Naive thymus-derived CD4-positive, alpha-beta T cell (primary cell): ENCODE measurements at regions of chr4 and their contacts with region 1.

Region 1: GRCh38 chr4:146916479-146917076 is 29.1 kb downstream of the TTC29 start:
- DNase-seq: peak in 5 of 9 donors; percentile 3 to 19 (median 18)
- ATAC-seq: no peak
- H3K4me3 ChIP-seq: no peak overlapping the region
- H3K4me3 Mint-ChIP-seq: no peak overlapping the region
- H3K27ac ChIP-seq: no peak overlapping the region
- H3K27ac Mint-ChIP-seq: no peak overlapping the region
- H3K4me1 ChIP-seq: no peaks in the 10 kb centered on the region
- H3K4me1 Mint-ChIP-seq: no peaks in the 10 kb centered on the region
- H3K27me3 ChIP-seq: peaks cover 0 to 3% of the 10 kb centered on the region in 2 donors
- H3K27me3 Mint-ChIP-seq: peaks cover 0 to 20% (median 13%) of the 10 kb centered on the region in 5 donors

Region 2: GRCh38 chr4:145285928-145286327 is 1630.7 kb before region 1 on chr4:
- CTCF ChIA-PET with region 1: no interaction called
- POLR2A ChIA-PET with region 1: no interaction called
- intact Hi-C with region 1: no loop called
- DNase-seq: no peak
- ATAC-seq: no peak
- H3K4me3 ChIP-seq: no peak overlapping the region
- H3K4me3 Mint-ChIP-seq: no peak overlapping the region
- H3K27ac ChIP-seq: no peak overlapping the region
- H3K27ac Mint-ChIP-seq: no peak overlapping the region
- H3K4me1 ChIP-seq: no peaks in the 10 kb centered on the region
- H3K4me1 Mint-ChIP-seq: no peaks in the 10 kb centered on the region
- H3K27me3 ChIP-seq: no peaks in the 10 kb centered on the region
- H3K27me3 Mint-ChIP-seq: peaks cover 0 to 13% (median 4%) of the 10 kb centered on the region in 5 donors

Region 3: DNA sequence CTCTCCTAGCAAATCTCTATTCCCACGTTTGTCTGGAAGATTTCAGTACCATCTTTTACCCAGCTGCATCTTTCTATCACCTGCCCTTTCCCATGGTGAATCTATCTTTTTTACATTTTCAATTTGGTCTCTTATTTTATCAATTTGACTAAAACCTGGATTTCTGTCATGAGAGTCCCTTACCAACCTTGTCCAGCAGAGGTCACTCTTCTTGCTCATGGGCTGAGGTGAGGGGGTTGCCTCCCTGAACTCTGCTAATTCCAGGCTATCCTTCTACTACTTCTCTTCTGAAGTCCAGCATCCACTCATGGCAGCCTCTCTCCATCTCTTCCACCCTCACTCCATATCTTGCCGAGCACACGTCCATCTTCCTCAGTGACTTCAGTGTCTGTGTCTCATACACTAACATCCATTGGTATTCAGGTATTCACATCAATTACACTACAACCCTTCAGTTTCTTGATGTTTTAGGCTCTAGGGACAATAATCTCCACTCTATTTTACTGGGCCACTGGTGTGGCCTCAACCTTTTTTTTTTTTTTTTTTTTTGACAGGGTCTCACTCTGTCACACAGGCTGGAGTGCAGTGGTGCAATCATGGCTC is 960.2 kb before region 1 on chr4:
- CTCF ChIA-PET with region 1: no interaction called
- POLR2A ChIA-PET with region 1: no interaction called
- intact Hi-C with region 1: loop called (anchors 2 to 5 kb)
- DNase-seq: peak in 7 of 9 donors; percentile 22 to 43 (median 28)
- ATAC-seq: peak; percentile 70
- H3K4me3 ChIP-seq: no peak overlapping the region
- H3K4me3 Mint-ChIP-seq: no peak overlapping the region
- H3K27ac ChIP-seq: no peak overlapping the region
- H3K27ac Mint-ChIP-seq: no peak overlapping the region
- H3K4me1 ChIP-seq: no peaks in the 10 kb centered on the region
- H3K4me1 Mint-ChIP-seq: peaks cover 0 to 4% (median 0%) of the 10 kb centered on the region in 7 donors
- H3K27me3 ChIP-seq: no peaks in the 10 kb centered on the region
- H3K27me3 Mint-ChIP-seq: peaks cover 0 to 9% (median 5%) of the 10 kb centered on the region in 5 donors

Region 4: DNA sequence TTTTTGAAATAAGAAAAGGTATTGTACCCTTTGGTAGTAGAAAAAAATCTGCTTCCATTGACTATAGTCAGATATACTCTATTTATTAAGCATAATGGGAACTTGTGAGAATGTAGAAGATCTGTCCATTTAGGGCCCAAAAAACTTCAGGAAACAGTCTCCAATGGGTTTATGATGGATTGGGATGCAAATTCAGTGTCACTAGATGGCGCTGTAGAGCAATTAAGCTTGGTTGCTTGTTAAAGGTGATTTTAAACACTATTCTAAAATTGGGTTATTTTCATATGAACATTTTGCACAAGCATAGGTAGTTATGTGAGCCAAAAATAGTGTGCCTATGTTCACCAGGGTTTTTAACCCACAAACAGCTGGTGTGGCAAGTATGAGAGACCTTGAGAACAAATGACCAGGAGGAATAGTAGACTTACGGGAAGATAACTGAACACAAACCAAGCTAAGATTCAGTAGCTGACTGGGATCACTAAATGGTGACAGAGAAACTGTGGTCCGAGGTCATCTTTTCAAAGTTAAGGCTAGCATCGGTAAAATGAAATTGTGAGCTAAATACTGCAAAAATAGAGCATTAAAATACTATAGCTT is 821.4 kb before region 1 on chr4:
- CTCF ChIA-PET with region 1: no interaction called
- POLR2A ChIA-PET with region 1: no interaction called
- intact Hi-C with region 1: loop called in 1 of 2 experiments (anchors 1 kb)
- DNase-seq: peak in 2 of 9 donors; percentile 3 to 7
- ATAC-seq: no peak
- H3K4me3 ChIP-seq: no peak overlapping the region
- H3K4me3 Mint-ChIP-seq: no peak overlapping the region
- H3K27ac ChIP-seq: no peak overlapping the region
- H3K27ac Mint-ChIP-seq: no peak overlapping the region
- H3K4me1 ChIP-seq: no peaks in the 10 kb centered on the region
- H3K4me1 Mint-ChIP-seq: no peaks in the 10 kb centered on the region
- H3K27me3 ChIP-seq: no peaks in the 10 kb centered on the region
- H3K27me3 Mint-ChIP-seq: peaks cover 13 to 25% (median 16%) of the 10 kb centered on the region in 5 donors

Region 5: GRCh38 chr4:146243141-146243882 is 673.3 kb before region 1 on chr4:
- CTCF ChIA-PET with region 1: no interaction called
- POLR2A ChIA-PET with region 1: no interaction called
- intact Hi-C with region 1: loop called in 1 of 2 experiments (anchors 1 kb)
- DNase-seq: peak in 8 of 9 donors; percentile 10 to 76 (median 31)
- ATAC-seq: peak; percentile 59
- H3K4me3 ChIP-seq: peak overlapping the region; percentile 3
- H3K4me3 Mint-ChIP-seq: peak overlapping the region; percentile 36 to 72 (median 60)
- H3K27ac ChIP-seq: no peak overlapping the region
- H3K27ac Mint-ChIP-seq: peak overlapping the region in 1 of 9 donors; percentile 32
- H3K4me1 ChIP-seq: peaks cover 0 to 10% of the 10 kb centered on the region in 2 donors
- H3K4me1 Mint-ChIP-seq: peaks cover 4 to 15% (median 13%) of the 10 kb centered on the region in 7 donors
- H3K27me3 ChIP-seq: no peaks in the 10 kb centered on the region
- H3K27me3 Mint-ChIP-seq: peaks cover 0 to 9% (median under 1%) of the 10 kb centered on the region in 5 donors

Region 6: GRCh38 chr4:146342600-146343192 is 573.9 kb before region 1 on chr4:
- CTCF ChIA-PET with region 1: interaction called, 3 read pairs
- POLR2A ChIA-PET with region 1: no interaction called
- intact Hi-C with region 1: loop called (anchors 1 kb)
- DNase-seq: peak in 5 of 9 donors; percentile 27 to 43 (median 31)
- ATAC-seq: no peak
- H3K4me3 ChIP-seq: no peak overlapping the region
- H3K4me3 Mint-ChIP-seq: no peak overlapping the region
- H3K27ac ChIP-seq: no peak overlapping the region
- H3K27ac Mint-ChIP-seq: no peak overlapping the region
- H3K4me1 ChIP-seq: no peaks in the 10 kb centered on the region
- H3K4me1 Mint-ChIP-seq: peaks cover 0 to 12% (median 5%) of the 10 kb centered on the region in 7 donors
- H3K27me3 ChIP-seq: no peaks in the 10 kb centered on the region
- H3K27me3 Mint-ChIP-seq: no peaks in the 10 kb centered on the region

Region 7: DNA sequence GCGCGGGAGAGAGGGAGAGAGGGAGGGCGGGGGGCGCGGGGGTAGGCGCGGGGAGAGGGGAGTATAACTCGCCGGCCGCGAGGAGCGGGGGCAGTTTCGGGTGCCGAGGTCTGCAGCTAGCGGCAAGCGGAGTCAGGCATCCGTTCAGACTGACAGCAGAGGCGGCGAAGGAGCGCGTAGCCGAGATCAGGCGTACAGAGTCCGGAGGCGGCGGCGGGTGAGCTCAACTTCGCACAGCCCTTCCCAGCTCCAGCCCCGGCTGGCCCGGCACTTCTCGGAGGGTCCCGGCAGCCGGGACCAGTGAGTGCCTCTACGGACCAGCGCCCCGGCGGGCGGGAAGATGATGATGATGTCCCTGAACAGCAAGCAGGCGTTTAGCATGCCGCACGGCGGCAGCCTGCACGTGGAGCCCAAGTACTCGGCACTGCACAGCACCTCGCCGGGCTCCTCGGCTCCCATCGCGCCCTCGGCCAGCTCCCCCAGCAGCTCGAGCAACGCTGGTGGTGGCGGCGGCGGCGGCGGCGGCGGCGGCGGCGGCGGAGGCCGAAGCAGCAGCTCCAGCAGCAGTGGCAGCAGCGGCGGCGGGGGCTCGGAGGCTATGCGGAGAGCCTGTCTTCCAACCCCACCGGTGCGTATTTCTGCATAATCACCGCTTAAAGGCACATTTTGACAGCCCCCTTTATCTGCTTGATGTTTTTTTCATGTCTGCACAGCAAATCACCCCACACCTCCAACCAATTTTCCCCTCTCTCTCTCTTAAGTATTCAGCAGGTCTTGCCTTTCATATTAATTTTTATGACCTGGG is 277.6 kb before region 1 on chr4 and contains the start of gene POU4F2:
- CTCF ChIA-PET with region 1: no interaction called
- POLR2A ChIA-PET with region 1: no interaction called
- intact Hi-C with region 1: no loop called
- DNase-seq: no peak
- ATAC-seq: no peak
- H3K4me3 ChIP-seq: no peak within 1 kb of the TSS
- H3K4me3 Mint-ChIP-seq: peak within 1 kb of the TSS in 9 of 10 donors; percentile 14 to 78 (median 61)
- H3K27ac ChIP-seq: no peak within 1 kb of the TSS
- H3K27ac Mint-ChIP-seq: peak within 1 kb of the TSS in 1 of 9 donors; percentile 78
- H3K4me1 ChIP-seq: no peaks in the 10 kb centered on the region
- H3K4me1 Mint-ChIP-seq: peaks cover 11 to 32% (median 17%) of the 10 kb centered on the region in 7 donors
- H3K27me3 ChIP-seq: peaks cover 5 to 38% of the 10 kb centered on the region in 2 donors
- H3K27me3 Mint-ChIP-seq: peaks cover 80 to 88% (median 85%) of the 10 kb centered on the region in 5 donors
- total RNA-seq, gene POU4F2: not detected

Region 8: DNA sequence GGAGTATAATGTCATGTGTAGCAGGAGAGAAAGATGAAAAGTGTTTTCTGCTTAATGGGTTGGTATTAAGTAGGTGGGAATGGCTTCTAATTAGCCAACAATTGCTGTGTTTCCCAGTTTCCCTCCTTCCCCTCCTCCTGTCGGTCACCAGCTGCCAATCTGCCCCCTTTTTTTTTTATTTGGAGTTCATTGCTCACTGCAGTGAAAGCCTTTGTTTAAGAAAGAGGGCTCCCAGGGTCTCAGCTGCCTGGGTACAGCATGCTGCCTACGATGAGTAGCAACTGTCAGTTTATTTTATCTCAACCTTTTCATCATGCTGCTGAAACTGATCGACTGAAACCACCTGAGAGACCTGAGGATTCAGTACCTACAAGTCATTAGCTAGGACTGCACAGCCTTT is 128.8 kb before region 1 on chr4:
- CTCF ChIA-PET with region 1: no interaction called
- POLR2A ChIA-PET with region 1: no interaction called
- intact Hi-C with region 1: no loop called
- DNase-seq: no peak
- ATAC-seq: no peak
- H3K4me3 ChIP-seq: no peak overlapping the region
- H3K4me3 Mint-ChIP-seq: no peak overlapping the region
- H3K27ac ChIP-seq: no peak overlapping the region
- H3K27ac Mint-ChIP-seq: no peak overlapping the region
- H3K4me1 ChIP-seq: no peaks in the 10 kb centered on the region
- H3K4me1 Mint-ChIP-seq: no peaks in the 10 kb centered on the region
- H3K27me3 ChIP-seq: no peaks in the 10 kb centered on the region
- H3K27me3 Mint-ChIP-seq: peaks cover 0 to 14% (median 3%) of the 10 kb centered on the region in 5 donors